ENCODE measurements at regions of chr12 and their contacts with region 1.

Region 1: DNA sequence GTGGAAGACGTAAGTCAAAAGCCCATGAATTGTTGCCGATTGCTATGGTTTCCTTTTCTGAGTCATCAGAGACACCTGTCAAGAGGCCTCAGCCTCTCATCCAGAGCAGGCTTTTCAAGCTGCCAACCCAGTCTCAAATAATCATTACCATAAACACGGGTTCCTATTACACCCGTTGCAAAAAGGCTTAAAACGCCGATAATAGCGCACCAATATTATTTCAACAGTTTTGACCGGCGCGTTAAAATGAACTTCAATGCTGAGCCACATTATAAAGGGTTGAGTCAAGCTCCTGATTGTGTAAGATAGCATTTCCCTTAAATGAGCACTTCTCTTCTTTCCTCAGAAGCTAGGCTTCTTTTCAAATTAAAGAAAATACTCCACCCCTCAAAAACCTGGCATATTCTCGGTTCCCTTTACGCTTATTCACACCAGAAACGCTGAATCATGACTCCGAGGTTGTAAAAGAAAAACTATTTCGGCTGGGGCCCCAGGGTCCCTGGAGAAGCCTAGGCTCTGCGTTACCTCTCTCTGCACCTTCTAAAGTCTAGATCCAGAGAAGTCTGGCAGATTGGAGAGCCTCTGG is 1.4 kb downstream of the TMTC1 start:
- DNase-seq: no peak
- ATAC-seq: peak; percentile 47

Region 2: DNA sequence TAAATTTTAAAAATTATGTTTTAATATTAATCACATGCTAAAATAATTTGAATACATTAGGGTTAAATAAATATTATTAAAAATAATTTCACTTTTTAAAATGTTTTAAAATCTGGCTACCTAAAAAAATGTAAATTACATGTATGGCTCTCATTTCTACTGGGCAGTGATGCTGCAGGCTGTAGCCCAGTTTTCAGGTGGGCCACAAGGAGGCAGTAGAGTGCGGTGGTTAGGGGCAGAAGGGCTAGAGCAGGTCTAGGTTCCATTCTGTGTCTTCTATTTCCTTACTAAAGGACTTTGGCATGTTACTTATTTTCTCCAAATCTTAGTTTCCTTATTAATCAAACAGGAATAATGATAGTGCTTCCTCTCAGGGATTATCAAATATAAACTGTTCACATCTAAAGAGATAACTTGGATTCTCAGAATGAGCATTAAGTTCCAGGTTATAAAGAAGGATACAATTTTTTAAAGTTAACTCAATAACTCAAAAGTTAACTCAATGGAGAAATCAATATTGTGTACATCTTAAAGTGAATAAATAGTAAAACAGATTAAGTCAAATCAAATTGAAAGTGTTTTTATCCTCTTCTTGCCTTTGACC is 230.0 kb before region 1 on chr12:
- intact Hi-C with region 1: loop called (anchors 10 kb)
- DNase-seq: peak; percentile 73
- ATAC-seq: peak; percentile 93

Region 3: DNA sequence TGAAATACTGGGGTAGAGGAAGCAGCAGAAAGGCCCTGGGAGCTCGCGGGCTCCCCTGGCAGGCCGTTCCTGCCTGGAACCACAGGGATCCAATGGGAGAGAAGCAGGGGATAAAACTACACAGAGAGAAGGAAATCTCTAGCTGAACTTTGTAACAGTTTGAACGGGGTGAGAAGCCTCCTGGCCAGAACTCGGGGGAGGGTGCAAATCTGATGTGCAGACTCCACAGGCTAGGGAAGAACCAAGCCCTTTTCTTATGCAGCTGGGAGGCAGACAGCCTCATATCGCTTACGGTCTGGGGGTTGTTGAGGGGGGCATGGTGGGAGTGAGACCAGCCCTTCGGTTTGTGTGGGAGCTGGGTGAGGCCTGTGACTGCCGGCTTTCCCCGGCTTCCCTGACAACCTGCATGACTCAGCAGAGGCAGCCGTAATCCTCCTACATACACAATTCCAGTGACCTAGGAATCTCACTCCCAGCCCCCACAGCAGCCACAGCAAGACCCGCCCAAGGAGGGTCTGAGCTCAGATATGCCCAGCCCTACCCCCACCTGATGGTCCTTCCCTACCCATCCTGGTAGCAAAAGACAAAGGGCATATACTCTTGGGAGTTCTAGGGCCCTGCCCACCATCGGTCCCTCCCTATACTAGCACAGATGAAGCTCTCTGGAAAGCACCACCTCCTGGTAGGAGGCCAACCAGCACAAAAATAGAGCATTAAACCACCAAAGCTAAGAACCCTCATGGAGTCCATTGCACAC is 141.6 kb before region 1 on chr12:
- intact Hi-C with region 1: loop called (anchors 10 kb)
- DNase-seq: peak; percentile 72
- ATAC-seq: peak; percentile 77

Measured in Right ventricle myocardium superior (tissue), 1 donor.